Activated CD4-positive, alpha-beta memory T cell treated with anti-CD3 and anti-CD28 coated beads for 36 hours (primary cell): ENCODE measurements at regions of chr2 and their contacts with region 1.

Region 1: DNA sequence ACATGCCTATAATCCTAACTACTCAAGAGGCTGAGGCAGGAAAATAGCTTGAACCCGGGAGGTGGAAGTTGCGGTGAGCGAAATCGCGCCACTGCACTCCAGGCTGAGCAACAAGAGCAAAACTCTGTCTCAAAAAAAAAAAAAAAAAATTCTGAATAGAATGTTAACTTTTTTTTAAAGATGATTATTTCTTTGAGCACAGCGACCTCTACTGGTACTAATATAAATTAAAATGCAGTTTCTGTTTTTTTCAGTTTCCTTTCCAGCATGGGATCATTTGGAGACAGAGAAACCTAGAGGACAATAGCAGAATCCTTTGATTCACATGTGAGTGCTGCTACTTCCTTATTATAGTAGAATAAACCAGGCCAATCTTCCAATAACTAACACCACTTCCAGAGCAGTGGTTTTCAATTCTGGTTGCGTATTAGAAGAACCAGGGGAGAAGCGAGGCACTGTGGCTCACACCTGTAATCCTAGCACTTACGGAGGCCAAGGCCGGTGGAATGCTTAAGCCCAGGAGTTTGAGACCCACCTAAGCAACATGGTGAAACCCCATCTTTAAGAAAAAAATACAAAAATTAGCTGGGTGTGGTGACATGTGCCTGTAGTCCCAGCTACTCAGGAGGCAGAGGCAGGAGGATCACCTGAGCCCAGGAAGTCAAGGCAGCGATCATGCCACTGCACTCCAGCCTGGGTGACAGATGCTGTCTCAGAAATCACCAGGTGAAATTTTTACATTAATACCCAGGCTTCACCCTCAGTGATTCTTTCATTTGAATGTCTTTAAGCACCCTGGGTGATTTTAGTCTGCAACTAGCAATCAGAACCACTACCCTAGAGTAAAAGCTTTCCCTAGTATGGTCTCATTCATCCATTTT is 10.1 kb downstream of the SRSF7 start:
- DNase-seq: peak; percentile 51
- H3K4me3 Mint-ChIP-seq: no peak overlapping the region
- H3K27ac Mint-ChIP-seq: peak overlapping the region; percentile 61
- H3K4me1 Mint-ChIP-seq: peaks cover 66% of the 10 kb centered on the region
- H3K27me3 Mint-ChIP-seq: no peaks in the 10 kb centered on the region

Region 2: GRCh38 chr2:38315707-38316333 is 425.3 kb before region 1 on chr2:
- CTCF ChIA-PET with region 1: interaction called, 13 read pairs
- POLR2A ChIA-PET with region 1: interaction called, 3 read pairs
- intact Hi-C with region 1: loop called (anchors 5 kb)
- DNase-seq: no peak
- H3K4me3 Mint-ChIP-seq: no peak overlapping the region
- H3K27ac Mint-ChIP-seq: no peak overlapping the region
- H3K4me1 Mint-ChIP-seq: peaks cover 13% of the 10 kb centered on the region
- H3K27me3 Mint-ChIP-seq: no peaks in the 10 kb centered on the region

Region 3: GRCh38 chr2:38535744-38536506 is 205.2 kb before region 1 on chr2:
- CTCF ChIA-PET with region 1: interaction called, 93 read pairs
- POLR2A ChIA-PET with region 1: interaction called, 3 read pairs
- intact Hi-C with region 1: loop called (anchors 1 kb)
- DNase-seq: peak; percentile 85
- H3K4me3 Mint-ChIP-seq: peak overlapping the region; percentile 59
- H3K27ac Mint-ChIP-seq: no peak overlapping the region
- H3K4me1 Mint-ChIP-seq: peaks cover 6% of the 10 kb centered on the region
- H3K27me3 Mint-ChIP-seq: no peaks in the 10 kb centered on the region

Region 4: GRCh38 chr2:38554973-38555595 is 186.0 kb before region 1 on chr2:
- CTCF ChIA-PET with region 1: interaction called, 20 read pairs
- POLR2A ChIA-PET with region 1: no interaction called
- intact Hi-C with region 1: no loop called
- DNase-seq: no peak
- H3K4me3 Mint-ChIP-seq: no peak overlapping the region
- H3K27ac Mint-ChIP-seq: no peak overlapping the region
- H3K4me1 Mint-ChIP-seq: peaks cover 15% of the 10 kb centered on the region
- H3K27me3 Mint-ChIP-seq: no peaks in the 10 kb centered on the region

Region 5: DNA sequence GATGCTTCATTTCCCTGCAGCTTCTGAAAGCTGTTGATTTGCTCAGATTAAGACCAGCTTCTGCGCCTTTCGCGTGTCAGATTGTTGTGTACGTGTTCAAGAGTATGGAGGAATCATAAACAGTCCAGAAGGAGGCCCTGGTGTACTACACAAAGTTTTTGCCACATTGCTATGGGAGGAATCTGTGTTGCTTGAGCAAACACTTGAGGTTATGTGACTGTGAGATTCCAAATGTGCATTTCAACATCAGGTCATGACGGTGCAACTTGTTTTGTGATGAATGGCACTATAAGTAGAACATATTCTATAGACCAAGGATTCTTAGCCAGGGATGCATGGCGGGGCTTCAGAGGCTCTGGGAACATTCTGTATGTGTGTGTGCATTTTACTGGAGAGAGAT is 24.9 kb before region 1 on chr2:
- CTCF ChIA-PET with region 1: no interaction called
- POLR2A ChIA-PET with region 1: no interaction called
- intact Hi-C with region 1: no loop called
- DNase-seq: no peak
- H3K4me3 Mint-ChIP-seq: no peak overlapping the region
- H3K27ac Mint-ChIP-seq: peak overlapping the region; percentile 89
- H3K4me1 Mint-ChIP-seq: peaks cover 70% of the 10 kb centered on the region
- H3K27me3 Mint-ChIP-seq: no peaks in the 10 kb centered on the region

Region 6: GRCh38 chr2:38728694-38729093 is 12.4 kb before region 1 on chr2:
- CTCF ChIA-PET with region 1: interaction called, 19 read pairs
- POLR2A ChIA-PET with region 1: interaction called, 12 read pairs
- intact Hi-C with region 1: loop called (anchors 1 kb)
- DNase-seq: no peak
- H3K4me3 Mint-ChIP-seq: no peak overlapping the region
- H3K27ac Mint-ChIP-seq: no peak overlapping the region
- H3K4me1 Mint-ChIP-seq: peaks cover 22% of the 10 kb centered on the region
- H3K27me3 Mint-ChIP-seq: no peaks in the 10 kb centered on the region